Natural killer cell (primary cell): ENCODE measurements at regions of chr11 and their contacts with region 1.

Region 1: DNA sequence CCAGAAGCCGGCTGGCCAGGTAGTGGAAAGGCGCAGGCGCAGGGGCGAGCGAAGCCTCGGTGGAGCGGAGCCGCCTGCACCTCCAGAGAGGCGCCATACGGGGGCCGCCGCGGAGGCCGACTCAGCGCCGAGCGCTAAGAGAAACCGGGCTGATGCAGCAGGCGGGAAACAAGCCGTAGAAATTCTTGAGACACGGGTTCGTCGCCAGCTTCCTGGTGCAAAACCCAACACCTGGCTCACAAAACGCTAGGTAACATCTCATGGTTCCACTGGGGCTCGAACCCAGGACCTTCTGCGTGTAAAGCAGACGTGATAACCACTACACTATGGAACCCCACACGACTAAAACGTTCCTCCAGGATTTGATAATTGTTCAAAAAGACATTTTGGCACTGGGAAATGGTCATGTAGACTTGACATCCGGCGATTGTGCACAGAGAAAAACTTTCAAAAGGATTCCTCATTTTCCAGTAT is 39.1 kb downstream of the OR4D9 start:
- DNase-seq: peak; percentile 72 to 92
- ATAC-seq: peak; percentile 80 to 89 (median 87)
- H3K4me3 ChIP-seq: peak overlapping the region; percentile 59
- H3K4me3 Mint-ChIP-seq: peak overlapping the region; percentile 99
- H3K27ac ChIP-seq: peak overlapping the region; percentile 49
- H3K27ac Mint-ChIP-seq: peak overlapping the region; percentile 98 to 100
- H3K4me1 ChIP-seq: peaks cover 12% of the 10 kb centered on the region
- H3K4me1 Mint-ChIP-seq: peaks cover 17 to 23% of the 10 kb centered on the region in 2 donors
- H3K27me3 ChIP-seq: no peaks in the 10 kb centered on the region
- H3K27me3 Mint-ChIP-seq: peaks cover 3 to 18% of the 10 kb centered on the region in 2 donors
- CTCF ChIP-seq: peak; percentile 44

Region 2: GRCh38 chr11:59510940-59511589 is 39.3 kb before region 1 on chr11 and contains the start of gene OR4D9:
- intact Hi-C with region 1: no loop called
- DNase-seq: peak in 1 of 2 donors; percentile 23
- ATAC-seq: no peak
- H3K4me3 ChIP-seq: no peak within 1 kb of the TSS
- H3K4me3 Mint-ChIP-seq: no peak within 1 kb of the TSS
- H3K27ac ChIP-seq: no peak within 1 kb of the TSS
- H3K27ac Mint-ChIP-seq: no peak within 1 kb of the TSS
- H3K4me1 ChIP-seq: peaks cover 6% of the 10 kb centered on the region
- H3K4me1 Mint-ChIP-seq: peaks cover 0 to 8% of the 10 kb centered on the region in 2 donors
- H3K27me3 ChIP-seq: no peaks in the 10 kb centered on the region
- H3K27me3 Mint-ChIP-seq: peaks cover 6 to 8% of the 10 kb centered on the region in 2 donors
- CTCF ChIP-seq: no peak
- total RNA-seq, gene OR4D9: not detected

Region 3: GRCh38 chr11:59560702-59561469 is 10.5 kb after region 1 on chr11:
- intact Hi-C with region 1: loop called (anchors 1 kb)
- DNase-seq: peak; percentile 60 to 91
- ATAC-seq: peak; percentile 77 to 88 (median 79)
- H3K4me3 ChIP-seq: peak overlapping the region; percentile 86
- H3K4me3 Mint-ChIP-seq: peak overlapping the region; percentile 92
- H3K27ac ChIP-seq: peak overlapping the region; percentile 62
- H3K27ac Mint-ChIP-seq: peak overlapping the region; percentile 80 to 96
- H3K4me1 ChIP-seq: peaks cover 45% of the 10 kb centered on the region
- H3K4me1 Mint-ChIP-seq: peaks cover 45 to 49% of the 10 kb centered on the region in 2 donors
- H3K27me3 ChIP-seq: no peaks in the 10 kb centered on the region
- H3K27me3 Mint-ChIP-seq: peaks cover 10 to 12% of the 10 kb centered on the region in 2 donors
- CTCF ChIP-seq: no peak

Region 4: DNA sequence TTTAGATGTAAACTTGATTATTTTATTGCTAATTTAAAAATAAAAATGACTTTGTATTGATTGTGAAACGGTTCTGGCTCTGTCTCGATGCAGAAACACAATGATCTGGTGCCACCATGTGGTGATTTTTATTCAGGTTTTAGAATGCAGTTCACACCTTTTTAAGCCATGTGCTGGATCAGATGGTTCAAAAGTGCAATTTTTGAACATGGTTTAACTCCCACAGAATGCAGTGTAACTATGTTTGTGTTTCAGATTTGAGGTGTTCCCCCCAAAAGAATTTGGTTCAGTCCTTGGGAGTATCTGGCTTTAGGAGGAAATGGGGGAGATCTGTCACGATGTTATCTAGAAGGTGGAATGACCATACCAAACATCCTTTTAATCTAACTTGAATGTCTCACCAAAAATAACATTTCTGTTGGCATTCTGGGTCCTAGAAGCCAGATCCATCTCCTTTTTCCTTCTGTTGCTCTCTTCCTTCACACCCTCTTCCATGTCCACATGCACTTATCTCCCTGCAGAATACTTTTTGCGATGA is 252.3 kb after region 1 on chr11:
- intact Hi-C with region 1: loop called (anchors 10 kb)
- DNase-seq: peak in 1 of 2 donors; percentile 83
- ATAC-seq: peak in 2 of 3 donors; percentile 83 to 86
- H3K4me3 ChIP-seq: no peak overlapping the region
- H3K4me3 Mint-ChIP-seq: no peak overlapping the region
- H3K27ac ChIP-seq: no peak overlapping the region
- H3K27ac Mint-ChIP-seq: no peak overlapping the region
- H3K4me1 ChIP-seq: no peaks in the 10 kb centered on the region
- H3K4me1 Mint-ChIP-seq: peaks cover 0 to 12% of the 10 kb centered on the region in 2 donors
- H3K27me3 ChIP-seq: no peaks in the 10 kb centered on the region
- H3K27me3 Mint-ChIP-seq: no peaks in the 10 kb centered on the region
- CTCF ChIP-seq: peak; percentile 61